Mucosa of descending colon (tissue), 3 donors: ENCODE measurements at regions of chr6 and their contacts with region 1.

Region 1: GRCh38 chr6:31680840-31681671 is at the start of gene LY6G5C:
- DNase-seq: peak; percentile 87 to 90 (median 89)
- ATAC-seq: peak; percentile 87
- H3K4me3 ChIP-seq: no peak within 1 kb of the TSS
- H3K4me1 ChIP-seq: peaks cover 14% of the 10 kb centered on the region
- CTCF ChIP-seq: peak; percentile 68
- total RNA-seq, gene LY6G5C: 1.7 to 4.2 (median 2.1) TPM

Region 2: GRCh38 chr6:31862344-31863227 is 181.5 kb after region 1 on chr6 and contains the start of gene NEU1:
- intact Hi-C with region 1: loop called in 1 of 2 experiments (anchors 10 kb)
- DNase-seq: peak; percentile 98 to 100 (median 99)
- ATAC-seq: peak; percentile 97
- H3K4me3 ChIP-seq: peak within 1 kb of the TSS; percentile 43
- H3K4me1 ChIP-seq: peaks cover 4% of the 10 kb centered on the region
- CTCF ChIP-seq: no peak
- total RNA-seq, gene NEU1: 44.0 to 65.7 (median 45.0) TPM